ENCODE measurements at regions of chrX and their contacts with region 1.

Region 1: GRCh38 chrX:37926700-37927099 is 79.3 kb upstream of the DYNLT3 start:
- DNase-seq: peak; percentile 55
- H3K4me3 ChIP-seq: no peak overlapping the region
- H3K27ac ChIP-seq: no peak overlapping the region
- H3K4me1 ChIP-seq: peaks cover 8% of the 10 kb centered on the region
- H3K27me3 ChIP-seq: no peaks in the 10 kb centered on the region

Region 2: DNA sequence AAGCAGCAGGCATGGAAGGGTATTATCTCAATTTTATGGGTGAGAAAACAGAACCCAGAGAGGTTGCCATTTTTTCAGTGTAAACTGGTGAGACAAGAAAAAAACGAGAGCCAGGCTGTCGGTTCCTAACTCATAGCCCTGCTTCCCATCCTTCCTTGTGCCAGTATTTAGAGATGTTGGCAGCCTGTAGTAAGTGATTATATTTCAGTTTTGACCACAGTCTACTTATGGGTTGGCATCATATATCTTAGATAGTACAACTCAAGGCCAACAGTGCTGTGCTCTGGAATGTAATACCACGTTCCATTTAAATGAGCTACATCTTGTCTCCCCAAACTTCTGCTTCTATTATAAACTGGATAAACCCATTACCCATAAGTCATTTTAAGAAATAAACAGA is 200.4 kb before region 1 on chrX:
- in situ Hi-C with region 1: no loop called
- DNase-seq: no peak
- H3K4me3 ChIP-seq: no peak overlapping the region
- H3K27ac ChIP-seq: no peak overlapping the region
- H3K4me1 ChIP-seq: no peaks in the 10 kb centered on the region
- H3K27me3 ChIP-seq: no peaks in the 10 kb centered on the region

Region 3: GRCh38 chrX:38045538-38046096 is 118.9 kb after region 1 on chrX:
- in situ Hi-C with region 1: no loop called
- DNase-seq: no peak
- H3K4me3 ChIP-seq: no peak overlapping the region
- H3K27ac ChIP-seq: no peak overlapping the region
- H3K4me1 ChIP-seq: no peaks in the 10 kb centered on the region
- H3K27me3 ChIP-seq: no peaks in the 10 kb centered on the region

Region 4: DNA sequence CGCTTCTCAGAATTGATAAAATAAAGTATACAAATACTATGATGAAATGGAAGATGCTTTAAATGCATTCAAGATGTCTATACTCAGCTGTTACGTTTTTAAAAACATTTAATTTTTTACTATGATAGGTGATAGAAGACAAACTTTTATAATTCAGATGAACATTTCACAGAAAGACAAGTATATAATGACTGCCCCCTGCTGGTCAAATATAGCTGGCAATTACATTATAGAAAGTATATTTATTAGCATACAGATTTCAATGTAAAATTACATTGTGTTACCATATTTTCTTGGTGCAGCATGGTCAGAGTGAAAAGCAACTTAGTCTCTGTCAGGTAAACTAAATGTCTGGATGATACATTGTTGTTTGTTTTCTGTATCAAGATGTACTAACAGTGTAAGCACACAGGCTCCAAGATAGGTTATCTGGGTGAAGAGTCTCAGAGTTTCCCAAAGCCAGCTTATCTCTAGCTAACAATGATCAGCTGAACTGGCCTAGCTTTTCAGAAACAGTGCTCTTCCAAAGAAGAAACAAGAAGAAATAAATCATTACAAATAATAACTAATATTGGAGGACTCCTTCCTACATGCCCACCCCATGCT is 239.9 kb after region 1 on chrX:
- in situ Hi-C with region 1: loop called (anchors 10 kb)
- DNase-seq: peak; percentile 45
- H3K4me3 ChIP-seq: no peak overlapping the region
- H3K27ac ChIP-seq: no peak overlapping the region
- H3K4me1 ChIP-seq: no peaks in the 10 kb centered on the region
- H3K27me3 ChIP-seq: no peaks in the 10 kb centered on the region

Region 5: GRCh38 chrX:38929966-38930421 is 1003.3 kb after region 1 on chrX:
- in situ Hi-C with region 1: no loop called
- DNase-seq: peak; percentile 85
- H3K4me3 ChIP-seq: no peak overlapping the region
- H3K27ac ChIP-seq: peak overlapping the region; percentile 79
- H3K4me1 ChIP-seq: peaks cover 9% of the 10 kb centered on the region; the same call in 1 of the 2 replicates
- H3K27me3 ChIP-seq: no peaks in the 10 kb centered on the region